Activated B cell treated with CpG ODN at 0.5 μM for 24 hours (primary cell): ENCODE measurements at regions of chr4 and their contacts with region 1.

Region 1: DNA sequence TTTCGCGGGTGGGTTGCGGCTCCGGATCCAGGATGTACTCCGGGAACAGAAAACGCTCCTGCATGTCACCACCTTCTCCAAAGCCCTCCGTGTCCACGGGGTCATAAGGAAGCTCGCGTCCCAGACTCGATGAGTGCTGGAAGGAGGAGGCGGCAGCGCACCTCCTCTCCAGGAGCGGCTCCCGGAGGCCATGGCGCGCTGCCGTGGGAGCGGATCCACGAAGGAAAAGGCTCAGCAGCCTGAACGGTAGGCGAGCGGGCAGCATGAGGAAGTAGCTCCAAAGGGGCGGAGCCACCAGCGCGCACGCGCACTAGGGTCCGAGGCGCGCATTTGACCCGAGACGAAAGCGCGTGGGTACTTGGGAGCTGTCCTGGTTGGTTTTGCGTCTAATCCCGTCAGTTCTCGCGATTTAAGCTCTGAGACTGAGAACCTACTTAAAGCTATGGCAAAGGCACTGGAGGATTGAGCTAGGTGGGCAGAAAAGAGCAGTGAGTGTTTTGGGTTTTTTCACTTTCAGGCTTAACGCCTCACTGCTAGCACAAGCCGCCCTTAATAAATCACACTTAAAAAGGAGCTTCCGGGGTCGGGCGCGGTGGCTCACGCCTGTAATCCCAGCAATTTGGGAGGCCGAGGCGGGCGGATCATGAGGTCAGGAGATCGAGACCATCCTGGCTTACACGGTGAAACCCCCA is at the start of gene NOA1:
- DNase-seq: peak; percentile 98
- ATAC-seq: peak; percentile 86
- H3K4me3 Mint-ChIP-seq: peak within 1 kb of the TSS; percentile 99
- H3K27ac Mint-ChIP-seq: peak within 1 kb of the TSS; percentile 96
- H3K4me1 Mint-ChIP-seq: peaks cover 70% of the 10 kb centered on the region
- H3K27me3 Mint-ChIP-seq: no peaks in the 10 kb centered on the region
- CTCF ChIP-seq: no peak
- total RNA-seq, gene NOA1: 24.1 and 25.0 TPM in 2 replicates

Region 2: DNA sequence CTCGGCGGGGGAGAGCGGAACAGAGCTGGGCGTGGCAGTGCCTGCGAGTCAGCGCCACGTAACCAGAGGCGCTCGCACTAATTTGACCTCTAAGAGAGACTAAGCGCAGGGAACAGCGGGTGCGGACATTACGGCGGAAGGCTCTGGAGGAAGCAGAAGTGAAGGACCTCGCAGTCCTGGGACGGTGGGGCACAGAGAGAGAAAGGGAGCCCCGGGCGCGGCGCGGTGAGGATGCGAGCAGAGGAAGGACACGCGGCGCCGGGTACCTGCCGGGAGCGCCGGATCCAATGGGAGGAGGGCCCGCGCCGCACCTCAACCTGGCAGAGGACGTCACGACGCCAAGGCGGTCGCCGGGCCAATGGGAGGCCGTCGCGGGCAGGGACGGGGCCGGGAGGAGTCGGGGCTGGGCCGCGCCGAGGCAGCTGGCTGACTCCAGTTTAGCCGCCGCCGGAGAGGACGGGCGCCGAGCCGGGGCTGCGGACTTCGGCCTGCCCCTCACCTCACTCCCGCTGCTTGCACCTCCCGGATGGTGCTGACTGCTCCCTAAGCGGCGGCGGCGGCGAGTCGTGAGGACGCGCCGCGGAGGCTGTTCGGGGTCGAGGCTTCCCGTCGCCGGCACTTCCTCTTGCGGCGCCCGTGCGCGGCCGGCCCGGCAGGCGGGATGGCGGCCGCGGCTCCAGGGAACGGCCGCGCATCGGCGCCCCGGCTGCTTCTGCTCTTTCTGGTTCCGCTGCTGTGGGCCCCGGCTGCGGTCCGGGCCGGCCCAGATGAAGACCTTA is 1581.7 kb before region 1 on chr4 and contains the start of gene TMEM165:
- CTCF ChIA-PET with region 1: no interaction called
- POLR2A ChIA-PET with region 1: interaction called, 8 read pairs
- intact Hi-C with region 1: loop called (anchors 1 kb)
- DNase-seq: peak; percentile 89
- ATAC-seq: peak; percentile 92
- H3K4me3 Mint-ChIP-seq: peak within 1 kb of the TSS; percentile 91
- H3K27ac Mint-ChIP-seq: peak within 1 kb of the TSS; percentile 95
- H3K4me1 Mint-ChIP-seq: peaks cover 42% of the 10 kb centered on the region
- H3K27me3 Mint-ChIP-seq: no peaks in the 10 kb centered on the region
- CTCF ChIP-seq: no peak
- total RNA-seq, gene TMEM165: 80.3 and 90.2 TPM in 2 replicates

Region 3: GRCh38 chr4:56387023-56388001 is 590.2 kb before region 1 on chr4 and contains the start of gene AASDH:
- CTCF ChIA-PET with region 1: no interaction called
- POLR2A ChIA-PET with region 1: interaction called, 36 read pairs
- intact Hi-C with region 1: loop called (anchors 1 kb)
- DNase-seq: peak; percentile 96
- ATAC-seq: peak; percentile 90
- H3K4me3 Mint-ChIP-seq: peak within 1 kb of the TSS; percentile 93
- H3K27ac Mint-ChIP-seq: peak within 1 kb of the TSS; percentile 99
- H3K4me1 Mint-ChIP-seq: peaks cover 27% of the 10 kb centered on the region
- H3K27me3 Mint-ChIP-seq: no peaks in the 10 kb centered on the region
- CTCF ChIP-seq: no peak
- total RNA-seq, gene AASDH: 12.8 and 14.2 TPM in 2 replicates

Region 4: DNA sequence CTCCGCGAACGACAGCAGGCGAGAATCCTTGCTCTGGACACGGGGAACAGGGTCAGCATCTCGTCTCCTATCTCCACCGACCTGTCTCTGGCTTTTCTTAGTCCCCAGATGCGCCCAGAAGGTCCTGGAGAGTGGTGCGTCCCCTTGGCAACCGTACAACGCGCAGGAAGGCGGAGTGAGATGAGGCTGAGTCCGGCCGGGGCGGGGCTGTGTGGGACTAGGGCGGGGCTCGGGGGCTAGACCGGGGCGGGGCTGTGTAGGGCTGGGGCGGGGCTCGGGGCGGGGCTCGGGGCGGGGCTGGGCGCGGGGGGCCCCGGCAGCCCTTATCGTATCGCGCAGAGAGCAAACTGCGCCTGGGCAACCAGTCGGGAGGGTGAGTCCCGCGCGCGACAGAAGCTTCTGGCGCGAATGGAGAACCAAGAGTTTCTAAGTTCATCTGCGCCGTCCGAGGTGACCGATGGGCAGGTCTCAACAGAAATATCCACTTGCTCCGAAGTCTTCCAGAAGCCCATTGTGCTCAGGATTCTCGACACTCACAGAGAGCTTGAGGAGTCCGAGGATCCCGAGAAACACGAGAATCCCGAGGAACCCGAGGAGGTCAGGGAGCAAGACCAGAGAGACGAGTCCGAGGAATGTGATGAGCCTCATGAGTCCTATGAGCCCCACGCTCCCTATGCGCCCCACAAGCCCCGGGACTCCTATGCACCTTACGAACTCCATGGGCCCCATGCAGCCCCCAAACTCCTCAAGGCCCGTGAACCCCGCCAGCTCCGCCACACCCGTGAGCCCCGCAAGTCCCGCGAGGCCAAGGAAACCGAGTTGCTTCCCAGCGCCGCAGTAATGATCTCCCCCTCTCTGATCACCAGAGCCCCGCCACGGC is 447.0 kb before region 1 on chr4:
- CTCF ChIA-PET with region 1: no interaction called
- POLR2A ChIA-PET with region 1: no interaction called
- intact Hi-C with region 1: loop called (anchors 1 kb)
- DNase-seq: peak; percentile 72
- ATAC-seq: peak; percentile 99
- H3K4me3 Mint-ChIP-seq: peak overlapping the region; percentile 68
- H3K27ac Mint-ChIP-seq: no peak overlapping the region
- H3K4me1 Mint-ChIP-seq: peaks cover 4% of the 10 kb centered on the region
- H3K27me3 Mint-ChIP-seq: peaks cover 12% of the 10 kb centered on the region
- CTCF ChIP-seq: no peak

Region 5: GRCh38 chr4:56861365-56861764 is 116.1 kb before region 1 on chr4:
- CTCF ChIA-PET with region 1: no interaction called
- POLR2A ChIA-PET with region 1: no interaction called
- intact Hi-C with region 1: no loop called
- DNase-seq: no peak
- ATAC-seq: no peak
- H3K4me3 Mint-ChIP-seq: no peak overlapping the region
- H3K27ac Mint-ChIP-seq: no peak overlapping the region
- H3K4me1 Mint-ChIP-seq: peaks cover 8% of the 10 kb centered on the region
- H3K27me3 Mint-ChIP-seq: no peaks in the 10 kb centered on the region
- CTCF ChIP-seq: no peak

Region 6: GRCh38 chr4:56907489-56908205 is 69.8 kb before region 1 on chr4 and contains the start of gene REST:
- CTCF ChIA-PET with region 1: interaction called, 17 read pairs
- POLR2A ChIA-PET with region 1: interaction called, 127 read pairs
- intact Hi-C with region 1: loop called (anchors 1 kb)
- DNase-seq: peak; percentile 90
- ATAC-seq: peak; percentile 59
- H3K4me3 Mint-ChIP-seq: peak within 1 kb of the TSS; percentile 91
- H3K27ac Mint-ChIP-seq: peak within 1 kb of the TSS; percentile 77
- H3K4me1 Mint-ChIP-seq: peaks cover 41% of the 10 kb centered on the region
- H3K27me3 Mint-ChIP-seq: no peaks in the 10 kb centered on the region
- CTCF ChIP-seq: no peak
- total RNA-seq, gene REST: 48.3 and 49.1 TPM in 2 replicates